ENCODE measurements at regions of chr9 and their contacts with region 1.

Region 1: DNA sequence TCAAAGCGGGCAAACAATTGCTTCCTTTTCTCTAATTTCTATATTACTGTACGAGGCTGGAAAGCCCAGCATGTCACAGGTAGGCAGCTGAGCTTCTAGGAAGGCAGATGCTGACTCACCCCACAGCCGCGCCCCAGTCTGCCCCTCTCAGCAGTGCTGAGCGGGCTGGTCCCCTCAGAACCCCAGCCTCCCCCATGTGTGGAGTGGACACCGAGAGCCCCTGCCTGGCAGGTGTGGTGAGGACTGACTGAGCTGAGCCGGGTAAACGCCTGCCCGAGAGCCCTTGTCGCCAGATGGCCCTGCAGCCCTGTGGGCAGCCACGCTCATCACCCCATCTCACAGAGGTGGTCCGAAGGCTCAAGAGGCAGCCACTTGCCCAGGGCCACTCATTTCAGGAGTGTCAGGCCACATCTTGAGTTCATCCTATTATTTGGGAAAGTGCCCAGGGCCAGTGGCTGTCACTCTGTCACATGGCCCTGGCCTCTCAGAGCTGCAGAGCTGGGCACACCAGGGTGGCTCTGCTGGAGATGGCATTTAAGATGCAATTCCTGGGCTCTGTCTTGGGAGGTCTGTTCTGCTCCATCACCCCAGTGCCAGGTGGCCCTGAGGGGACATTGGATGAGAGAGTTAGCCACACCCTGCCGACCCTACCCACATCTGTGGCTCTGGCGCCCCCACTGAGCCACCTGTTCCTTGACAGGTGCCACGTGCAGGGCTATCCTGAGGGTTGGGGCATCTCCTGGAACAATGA is 12.4 kb downstream of the CARD19 start:
- DNase-seq: peak; percentile 52
- H3K4me3 Mint-ChIP-seq: peak overlapping the region; percentile 58
- H3K27ac Mint-ChIP-seq: peak overlapping the region; percentile 75
- H3K4me1 Mint-ChIP-seq: peaks cover 53% of the 10 kb centered on the region
- H3K27me3 Mint-ChIP-seq: no peaks in the 10 kb centered on the region

Region 2: GRCh38 chr9:93134015-93134739 is 25.7 kb after region 1 on chr9 and contains the start of gene NINJ1:
- intact Hi-C with region 1: loop called (anchors 1 kb)
- DNase-seq: peak; percentile 89
- H3K4me3 Mint-ChIP-seq: peak within 1 kb of the TSS; percentile 94
- H3K27ac Mint-ChIP-seq: peak within 1 kb of the TSS; percentile 96
- H3K4me1 Mint-ChIP-seq: peaks cover 57% of the 10 kb centered on the region
- H3K27me3 Mint-ChIP-seq: peaks cover 2% of the 10 kb centered on the region
- total RNA-seq, gene NINJ1: 94.2 and 95.3 TPM in 2 replicates

Region 3: GRCh38 chr9:93302551-93303257 is 194.2 kb after region 1 on chr9:
- intact Hi-C with region 1: loop called (anchors 1 kb)
- DNase-seq: peak; percentile 36
- H3K4me3 Mint-ChIP-seq: no peak overlapping the region
- H3K27ac Mint-ChIP-seq: no peak overlapping the region
- H3K4me1 Mint-ChIP-seq: peaks cover 9% of the 10 kb centered on the region
- H3K27me3 Mint-ChIP-seq: no peaks in the 10 kb centered on the region

Measured in activated T-helper 1 cell treated with anti-CD3 and anti-CD28 coated beads, Interleukin-12 subunit alpha, Interleukin-12 subunit beta, Interleukin-2, Interleukin-4 antibody, amounts not matched to agents 30 ng/mL and 10 ng/mL and 1 ng/mL, durations not matched to agents 14 hours and 24 hours and 36 hours (primary cell).